Activated naive CD4-positive, alpha-beta T cell treated with anti-CD3 and anti-CD28 coated beads for 36 hours (primary cell): ENCODE measurements at regions of chr11 and their contacts with region 1.

Region 1: GRCh38 chr11:68839054-68839865 is 2.5 kb downstream of the CPT1A start:
- DNase-seq: peak; percentile 96
- H3K4me3 Mint-ChIP-seq: peak overlapping the region; percentile 77
- H3K27ac Mint-ChIP-seq: peak overlapping the region; percentile 88
- H3K4me1 Mint-ChIP-seq: peaks cover 50% of the 10 kb centered on the region
- H3K27me3 Mint-ChIP-seq: no peaks in the 10 kb centered on the region

Region 2: GRCh38 chr11:68632802-68633201 is 206.5 kb before region 1 on chr11:
- CTCF ChIA-PET with region 1: no interaction called
- intact Hi-C with region 1: loop called (anchors 2 kb)
- DNase-seq: peak; percentile 75
- H3K4me3 Mint-ChIP-seq: no peak overlapping the region
- H3K27ac Mint-ChIP-seq: no peak overlapping the region
- H3K4me1 Mint-ChIP-seq: no peaks in the 10 kb centered on the region
- H3K27me3 Mint-ChIP-seq: no peaks in the 10 kb centered on the region

Region 3: GRCh38 chr11:68751004-68751856 is 88.0 kb before region 1 on chr11 and contains the start of gene TESMIN:
- CTCF ChIA-PET with region 1: interaction called, 6 read pairs
- intact Hi-C with region 1: loop called (anchors 1 kb)
- DNase-seq: peak; percentile 97
- H3K4me3 Mint-ChIP-seq: peak within 1 kb of the TSS; percentile 65
- H3K27ac Mint-ChIP-seq: no peak within 1 kb of the TSS
- H3K4me1 Mint-ChIP-seq: peaks cover 9% of the 10 kb centered on the region
- H3K27me3 Mint-ChIP-seq: no peaks in the 10 kb centered on the region
- total RNA-seq, gene TESMIN: 6.2 to 7.3 TPM

Region 4: DNA sequence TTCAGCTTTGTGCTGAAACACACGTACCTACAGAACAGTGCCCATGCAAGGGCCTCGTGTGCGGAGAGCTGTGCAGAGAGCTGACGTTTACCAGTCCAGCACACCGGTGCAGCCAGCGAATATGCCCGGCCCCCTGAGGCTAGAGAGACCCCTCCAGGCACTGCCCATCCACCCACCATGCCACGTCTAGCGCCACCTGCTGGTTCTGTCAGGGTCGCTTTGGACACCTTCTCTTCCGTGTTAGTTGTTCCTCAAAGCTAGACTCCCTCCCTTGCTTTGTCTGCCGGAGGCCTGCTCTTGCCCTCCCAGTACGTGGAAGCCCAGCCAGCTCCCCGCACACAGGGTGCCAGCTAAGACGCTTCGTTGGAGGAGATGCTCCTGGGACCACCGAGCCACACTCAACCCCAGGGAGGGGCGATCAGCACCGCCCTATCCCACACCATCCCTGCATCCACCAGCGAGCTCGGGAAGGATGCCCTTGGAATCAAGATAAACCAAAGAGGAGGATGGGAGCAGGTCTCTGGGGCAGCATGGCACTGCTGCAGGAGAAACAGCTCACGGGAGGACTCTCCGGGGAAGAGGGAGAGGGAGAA is 40.9 kb before region 1 on chr11:
- CTCF ChIA-PET with region 1: interaction called, 15 read pairs
- intact Hi-C with region 1: no loop called
- DNase-seq: peak; percentile 60
- H3K4me3 Mint-ChIP-seq: no peak overlapping the region
- H3K27ac Mint-ChIP-seq: no peak overlapping the region
- H3K4me1 Mint-ChIP-seq: no peaks in the 10 kb centered on the region
- H3K27me3 Mint-ChIP-seq: no peaks in the 10 kb centered on the region

Region 5: GRCh38 chr11:68825571-68825970 is 13.7 kb before region 1 on chr11:
- CTCF ChIA-PET with region 1: interaction called, 6 read pairs
- intact Hi-C with region 1: loop called (anchors 1 kb)
- DNase-seq: peak; percentile 79
- H3K4me3 Mint-ChIP-seq: no peak overlapping the region
- H3K27ac Mint-ChIP-seq: no peak overlapping the region
- H3K4me1 Mint-ChIP-seq: peaks cover 26% of the 10 kb centered on the region
- H3K27me3 Mint-ChIP-seq: no peaks in the 10 kb centered on the region

Region 6: GRCh38 chr11:68903288-68904247 is 64.3 kb after region 1 on chr11 and contains the starts of genes IGHMBP2 and MRPL21:
- CTCF ChIA-PET with region 1: no interaction called
- intact Hi-C with region 1: loop called (anchors 2 kb)
- DNase-seq: peak; percentile 88
- H3K4me3 Mint-ChIP-seq: peak within 1 kb of the TSS; percentile 88
- H3K27ac Mint-ChIP-seq: peak within 1 kb of the TSS; percentile 85
- H3K4me1 Mint-ChIP-seq: peaks cover 41% of the 10 kb centered on the region
- H3K27me3 Mint-ChIP-seq: no peaks in the 10 kb centered on the region
- total RNA-seq, gene IGHMBP2: 29.4 to 31.1 TPM
- total RNA-seq, gene MRPL21: 90.8 to 92.1 TPM

Region 7: GRCh38 chr11:69048718-69049489 is 209.6 kb after region 1 on chr11 and contains the start of gene TPCN2:
- CTCF ChIA-PET with region 1: no interaction called
- intact Hi-C with region 1: loop called (anchors 2 kb)
- DNase-seq: peak; percentile 90
- H3K4me3 Mint-ChIP-seq: peak within 1 kb of the TSS; percentile 72
- H3K27ac Mint-ChIP-seq: peak within 1 kb of the TSS; percentile 66
- H3K4me1 Mint-ChIP-seq: peaks cover 16% of the 10 kb centered on the region
- H3K27me3 Mint-ChIP-seq: no peaks in the 10 kb centered on the region
- total RNA-seq, gene TPCN2: 7.0 to 8.0 TPM